HepG2 (cell line): ENCODE measurements at regions of chr20 and their contacts with region 1.

Region 1: GRCh38 chr20:50278674-50279531 is 88.3 kb downstream of the CEBPB start:
- DNase-seq: peak; percentile 87
- ATAC-seq: peak; percentile 72
- H3K4me3 ChIP-seq: peak overlapping the region in 2 of 3 experiments; percentile 2 to 36; a peak in 1 of 6 replicates
- H3K27ac ChIP-seq: no peak overlapping the region
- H3K4me1 ChIP-seq: peaks cover 96% of the 10 kb centered on the region
- H3K27me3 ChIP-seq: no peaks in the 10 kb centered on the region
- CTCF ChIP-seq: peak; percentile 89
- EP300 ChIP-seq: peak in 1 of 2 experiments; percentile 47; a peak in 1 of 4 replicates
- POLR2A ChIP-seq: no peak
- RAD21 ChIP-seq: peak; percentile 96

Region 2: DNA sequence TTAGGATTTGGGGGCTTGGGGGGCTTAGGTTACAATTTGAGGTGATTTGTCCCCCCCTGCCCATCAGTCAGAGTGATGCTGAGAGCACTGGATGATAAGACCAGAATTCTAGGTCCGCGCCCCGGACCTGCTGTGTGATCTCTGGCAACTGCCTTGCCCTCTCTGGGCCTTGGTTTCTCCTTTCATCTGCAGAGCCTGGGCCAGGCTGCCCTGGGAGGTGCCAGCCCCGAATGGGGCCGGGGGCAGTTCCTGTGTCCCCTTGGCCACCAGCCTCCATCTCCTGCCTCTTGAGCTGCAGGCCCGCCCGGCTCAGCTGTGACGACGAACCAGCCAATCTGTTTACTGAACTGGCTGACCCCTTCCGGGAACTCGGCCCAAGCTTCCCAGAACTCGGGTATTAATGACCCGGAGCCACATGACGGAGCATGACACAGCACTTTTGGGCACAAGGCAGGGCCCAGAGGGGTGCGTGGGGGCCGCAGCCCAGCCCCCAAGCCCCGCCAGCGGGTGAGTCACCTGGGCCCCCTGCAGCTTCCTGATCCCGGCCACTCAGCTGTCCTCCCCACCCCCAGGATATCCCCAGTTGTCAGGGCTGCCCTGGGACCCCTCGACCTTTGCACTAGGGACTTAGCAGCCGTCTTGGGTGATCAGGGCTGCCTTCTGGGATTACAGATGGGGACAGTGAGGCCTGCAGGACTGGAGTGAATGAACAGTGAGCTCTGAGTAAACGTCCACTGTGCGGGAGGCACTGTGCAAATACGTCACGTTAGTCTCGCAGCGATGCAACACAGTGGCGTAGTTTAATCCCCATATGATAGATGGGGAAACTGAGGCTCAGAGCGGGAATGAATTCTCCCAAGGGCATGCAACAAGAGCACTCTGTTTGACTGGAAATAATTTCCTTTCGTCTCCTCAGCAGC is 13.7 kb after region 1 on chr20:
- CTCF ChIA-PET with region 1: no interaction called
- POLR2A ChIA-PET with region 1: interaction called, 28 read pairs
- in situ Hi-C with region 1: no loop called
- intact Hi-C with region 1: loop called (anchors 2 kb)
- DNase-seq: peak; percentile 97
- ATAC-seq: peak; percentile 69
- H3K4me3 ChIP-seq: peak overlapping the region in 1 of 3 experiments; percentile 39; a peak in 3 of 6 replicates
- H3K27ac ChIP-seq: peak overlapping the region; percentile 77
- H3K4me1 ChIP-seq: peaks cover 68% of the 10 kb centered on the region
- H3K27me3 ChIP-seq: no peaks in the 10 kb centered on the region
- CTCF ChIP-seq: peak; percentile 41
- EP300 ChIP-seq: peak; percentile 96 to 99
- POLR2A ChIP-seq: peak in 1 of 2 experiments; percentile 14; a peak in 2 of 4 replicates
- RAD21 ChIP-seq: peak; percentile 63

Region 3: DNA sequence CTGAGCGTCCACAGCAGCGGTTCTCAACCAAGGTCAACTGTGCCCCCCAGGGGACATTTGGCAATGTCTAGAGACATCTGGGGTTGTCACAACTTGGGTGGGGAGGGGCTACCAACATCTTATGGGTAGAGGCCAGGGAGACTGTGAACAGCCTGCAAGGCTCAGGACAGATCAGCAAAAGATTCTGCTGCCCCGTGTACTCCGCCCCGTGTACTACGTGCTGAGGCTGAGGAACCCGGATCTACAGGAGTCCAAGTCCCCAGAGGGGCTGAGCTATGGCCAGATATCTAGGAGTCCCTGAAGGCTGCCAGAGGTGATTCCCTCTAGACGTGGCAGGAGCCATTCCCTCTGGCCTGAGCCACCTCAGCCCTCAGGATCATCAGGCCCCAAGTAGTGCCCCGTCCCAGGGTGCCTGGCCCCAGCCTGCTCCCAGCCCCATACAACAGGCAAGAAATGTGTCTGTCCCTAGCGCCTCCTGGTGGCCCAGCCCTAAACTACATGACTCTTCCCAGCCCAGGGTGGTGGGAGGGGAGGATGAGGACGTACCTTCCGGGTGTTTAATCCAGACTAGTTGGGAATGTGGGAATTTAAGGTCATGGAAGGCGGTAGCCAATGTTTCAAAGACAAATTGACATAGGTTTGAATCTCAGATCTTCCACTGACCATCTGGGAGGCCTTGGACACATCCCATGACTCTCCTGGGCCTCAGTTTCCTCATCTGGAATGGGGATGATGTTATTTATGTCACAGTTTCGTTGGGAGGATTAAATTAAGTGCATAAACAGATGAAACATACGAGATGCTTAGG is 181.8 kb after region 1 on chr20:
- CTCF ChIA-PET with region 1: interaction called, 20 read pairs
- POLR2A ChIA-PET with region 1: interaction called, 4 read pairs
- in situ Hi-C with region 1: loop called (anchors 5 kb)
- intact Hi-C with region 1: loop called (anchors 1 kb)
- DNase-seq: peak; percentile 91
- ATAC-seq: peak; percentile 85
- H3K4me3 ChIP-seq: peak overlapping the region; percentile 15 to 64 (median 35); a peak in 5 of 6 replicates
- H3K27ac ChIP-seq: peak overlapping the region; percentile 45
- H3K4me1 ChIP-seq: peaks cover 89% of the 10 kb centered on the region
- H3K27me3 ChIP-seq: no peaks in the 10 kb centered on the region
- CTCF ChIP-seq: peak; percentile 100
- EP300 ChIP-seq: peak in 1 of 2 experiments; percentile 60; a peak in 3 of 4 replicates
- POLR2A ChIP-seq: peak in 1 of 2 experiments; percentile 28; a peak in 1 of 4 replicates
- RAD21 ChIP-seq: peak; percentile 100

Region 4: GRCh38 chr20:50575847-50576720 is 297.2 kb after region 1 on chr20:
- CTCF ChIA-PET with region 1: no interaction called
- POLR2A ChIA-PET with region 1: no interaction called
- in situ Hi-C with region 1: no loop called
- intact Hi-C with region 1: loop called (anchors 2 kb)
- DNase-seq: peak; percentile 63
- ATAC-seq: peak; percentile 91
- H3K4me3 ChIP-seq: no peak overlapping the region
- H3K27ac ChIP-seq: no peak overlapping the region
- H3K4me1 ChIP-seq: peaks cover 8% of the 10 kb centered on the region
- H3K27me3 ChIP-seq: no peaks in the 10 kb centered on the region
- CTCF ChIP-seq: peak; percentile 93
- EP300 ChIP-seq: no peak
- POLR2A ChIP-seq: no peak
- RAD21 ChIP-seq: peak; percentile 88